Activated CD8-positive, alpha-beta T cell treated with anti-CD3 and anti-CD28 coated beads, Interleukin-2, amount 10 ng/mL, durations not matched to agents 7 days and 5 days (primary cell): ENCODE measurements at regions of chr17 and their contacts with region 1.

Region 1: GRCh38 chr17:64020056-64020766 is at the start of gene ICAM2:
- DNase-seq: peak; percentile 96
- ATAC-seq: peak; percentile 78
- H3K4me3 Mint-ChIP-seq: peak within 1 kb of the TSS; percentile 96
- H3K27ac Mint-ChIP-seq: peak within 1 kb of the TSS; percentile 100
- H3K4me1 Mint-ChIP-seq: peaks cover 75% of the 10 kb centered on the region
- H3K27me3 Mint-ChIP-seq: no peaks in the 10 kb centered on the region
- total RNA-seq, gene ICAM2: 48.4 to 51.3 TPM

Region 2: DNA sequence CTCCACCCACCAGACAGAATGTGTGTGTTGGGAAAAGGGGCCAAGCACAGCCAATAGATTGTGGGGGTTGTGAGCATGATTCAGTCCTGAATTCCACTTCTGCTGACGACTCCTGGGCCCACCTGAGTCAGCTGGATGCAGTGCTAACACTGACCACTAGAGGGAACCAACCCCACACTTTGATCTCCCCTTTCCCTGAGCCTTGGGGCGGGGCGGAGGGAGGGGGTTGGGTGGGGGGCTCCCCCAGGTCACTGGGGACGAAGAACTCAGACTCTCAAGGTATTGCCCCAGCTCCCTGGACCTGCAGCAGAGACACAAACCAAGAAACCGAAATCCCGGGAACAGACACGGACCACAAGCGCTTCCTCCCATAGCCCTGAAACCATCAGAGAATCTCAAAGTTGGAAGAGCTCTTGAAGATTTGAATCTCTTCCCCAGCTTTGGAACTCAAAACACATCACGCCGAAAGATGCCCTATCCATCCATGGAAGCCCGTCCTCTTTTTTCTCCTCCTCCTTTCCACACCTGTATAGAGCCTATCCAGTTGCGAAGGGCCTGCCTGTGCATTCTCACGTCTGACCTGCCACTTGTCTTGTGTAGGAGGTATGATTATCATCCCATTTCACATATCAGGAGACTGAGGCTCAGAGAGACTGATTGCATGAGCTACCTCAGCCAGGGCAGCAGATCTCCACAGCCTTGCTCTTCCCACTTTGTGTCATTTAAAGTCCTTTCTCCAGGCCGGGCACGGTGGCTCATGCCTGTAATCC is 108.4 kb before region 1 on chr17:
- CTCF ChIA-PET with region 1: interaction called, 114 read pairs
- POLR2A ChIA-PET with region 1: no interaction called
- DNase-seq: peak; percentile 74
- ATAC-seq: peak; percentile 72
- H3K4me3 Mint-ChIP-seq: no peak overlapping the region
- H3K27ac Mint-ChIP-seq: no peak overlapping the region
- H3K4me1 Mint-ChIP-seq: no peaks in the 10 kb centered on the region
- H3K27me3 Mint-ChIP-seq: peaks cover 15% of the 10 kb centered on the region

Region 3: GRCh38 chr17:63998050-63998720 is 22.0 kb before region 1 on chr17 and contains the start of gene PRR29:
- CTCF ChIA-PET with region 1: interaction called, 44 read pairs
- POLR2A ChIA-PET with region 1: interaction called, 4 read pairs
- DNase-seq: peak; percentile 79
- ATAC-seq: peak; percentile 83
- H3K4me3 Mint-ChIP-seq: peak within 1 kb of the TSS; percentile 84
- H3K27ac Mint-ChIP-seq: peak within 1 kb of the TSS; percentile 82
- H3K4me1 Mint-ChIP-seq: peaks cover 51% of the 10 kb centered on the region
- H3K27me3 Mint-ChIP-seq: peaks cover 18% of the 10 kb centered on the region
- total RNA-seq, gene PRR29: 0.97 to 1.3 TPM